ENCODE measurements at regions of chr1 and their contacts with region 1.

Region 1: DNA sequence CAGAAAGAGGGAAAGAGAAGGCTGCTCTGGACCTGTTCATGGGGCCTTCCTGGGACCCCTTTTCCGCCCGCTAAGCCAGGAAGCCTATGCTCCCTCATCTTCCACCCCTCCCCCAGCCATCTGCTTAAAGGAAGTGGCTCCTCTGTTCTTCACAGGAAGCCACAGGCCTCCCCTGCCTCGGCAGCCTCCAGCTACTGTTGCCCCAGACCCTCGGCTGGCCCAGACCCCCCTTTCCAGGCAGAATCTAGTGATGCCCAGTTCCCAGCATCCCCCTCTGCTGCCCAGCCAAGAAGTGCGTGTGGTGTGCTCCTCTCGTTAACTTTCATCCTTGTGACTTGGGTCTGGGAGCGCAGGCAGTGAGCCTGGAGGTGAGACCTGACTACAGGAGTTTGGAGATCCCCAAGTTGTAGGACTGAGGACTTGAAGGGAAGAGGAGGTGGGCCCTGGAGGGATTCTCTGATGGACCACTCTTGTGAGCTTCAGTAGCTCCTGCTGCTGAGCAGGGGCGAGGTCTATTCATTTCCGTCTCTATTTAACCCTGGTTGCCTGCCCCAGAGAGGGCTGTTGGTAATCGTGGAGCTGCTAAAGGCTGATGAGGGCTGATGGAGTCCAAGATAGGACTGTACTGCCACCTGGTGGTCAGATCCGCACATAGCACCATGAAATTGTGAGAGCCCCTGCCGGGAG is 9.1 kb downstream of the IFI6 start:
- DNase-seq: peak; percentile 79
- ATAC-seq: peak; percentile 59 to 67

Region 2: GRCh38 chr1:27402349-27402754 is 260.5 kb before region 1 on chr1:
- intact Hi-C with region 1: loop called in 1 of 2 experiments (anchors 5 kb)
- DNase-seq: peak; percentile 81
- ATAC-seq: peak; percentile 50 to 56

Region 3: GRCh38 chr1:27556781-27557595 is 105.9 kb before region 1 on chr1:
- intact Hi-C with region 1: loop called in 1 of 2 experiments (anchors 10 kb)
- DNase-seq: peak; percentile 96
- ATAC-seq: peak; percentile 71 to 79

Region 4: DNA sequence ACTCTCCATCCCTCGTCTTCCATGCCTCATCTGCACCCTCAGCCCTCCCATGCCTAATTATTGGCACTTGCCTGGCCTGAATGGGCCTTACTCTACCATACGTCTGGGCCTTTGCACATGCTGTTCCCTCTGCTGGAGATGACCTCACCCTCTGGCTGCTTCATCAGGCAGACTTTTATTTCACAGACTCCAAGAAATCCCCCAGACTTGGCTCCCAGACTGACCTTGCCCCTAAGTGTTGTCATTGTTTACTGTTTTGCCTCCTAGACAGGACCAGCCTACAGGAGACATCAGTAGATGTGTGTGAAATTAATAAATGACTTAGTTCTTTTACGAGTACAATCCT is 53.7 kb before region 1 on chr1:
- intact Hi-C with region 1: loop called (anchors 1 to 2 kb)
- DNase-seq: no peak
- ATAC-seq: no peak

Region 5: DNA sequence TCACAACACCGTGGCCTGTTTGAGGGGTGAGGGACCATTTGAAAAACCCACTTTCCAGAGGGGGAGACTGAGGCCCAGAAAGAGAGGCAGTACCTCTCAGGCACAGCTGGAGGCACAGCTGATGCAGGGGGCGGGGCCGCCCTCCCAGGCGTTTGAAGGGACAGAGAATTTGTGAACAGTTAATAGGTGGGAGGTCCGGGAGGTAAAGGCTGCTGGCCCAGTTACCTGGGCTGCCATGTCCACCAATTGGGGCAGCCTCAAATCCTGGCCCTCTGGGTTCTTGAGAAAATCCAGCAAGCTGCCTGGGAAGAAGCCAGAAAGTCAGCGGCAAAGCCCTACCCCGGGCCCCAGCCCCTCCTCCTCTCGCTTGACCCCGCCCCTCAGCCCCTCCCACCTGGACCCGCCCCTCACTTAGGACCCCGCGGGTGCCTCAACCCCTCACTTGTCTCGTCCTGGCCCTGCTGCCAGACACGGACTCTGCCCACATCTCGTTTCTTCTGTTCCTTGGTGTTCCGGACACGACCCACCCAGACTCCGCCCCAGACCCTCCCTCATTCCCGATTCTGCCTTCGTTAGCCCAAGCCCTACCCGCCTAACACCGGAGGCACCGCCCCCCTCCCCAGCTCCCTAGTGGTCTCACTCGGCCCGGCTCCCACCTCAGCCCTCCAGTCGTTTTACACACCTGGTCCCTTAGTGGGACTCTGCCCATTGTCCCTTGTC is 48.1 kb before region 1 on chr1:
- intact Hi-C with region 1: loop called (anchors 1 to 2 kb)
- DNase-seq: no peak
- ATAC-seq: peak in 1 of 2 donors; percentile 15